ENCODE measurements at regions of chr15 and their contacts with region 1.

Region 1: GRCh38 chr15:92820236-92821021 is 79.7 kb upstream of the CHD2 start:
- DNase-seq: peak; percentile 88
- H3K4me3 Mint-ChIP-seq: peak overlapping the region; percentile 78
- H3K27ac Mint-ChIP-seq: peak overlapping the region; percentile 93
- H3K4me1 Mint-ChIP-seq: peaks cover 66% of the 10 kb centered on the region
- H3K27me3 Mint-ChIP-seq: no peaks in the 10 kb centered on the region

Region 2: DNA sequence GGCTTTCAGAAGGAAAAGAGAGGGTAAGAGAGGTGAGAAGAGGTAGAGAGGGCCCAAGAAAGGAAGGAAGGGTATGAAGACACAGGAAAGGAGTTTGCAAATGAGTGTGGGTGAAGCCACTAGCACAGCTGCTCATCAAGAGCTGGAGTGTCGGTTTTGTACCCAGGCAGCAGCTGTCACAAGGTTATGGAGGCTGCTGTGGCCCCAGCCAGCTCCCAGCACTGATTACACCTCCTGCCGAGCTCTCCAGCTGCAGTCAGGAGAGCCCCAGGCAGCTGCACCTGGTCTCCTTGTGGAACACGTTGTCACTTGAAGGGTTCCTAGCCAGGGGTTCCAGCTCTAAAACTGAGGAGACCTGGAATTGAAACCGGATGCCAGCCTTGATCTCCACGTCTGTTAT is 19.3 kb after region 1 on chr15:
- CTCF ChIA-PET with region 1: interaction called, 3 read pairs
- POLR2A ChIA-PET with region 1: interaction called, 12 read pairs
- DNase-seq: no peak
- H3K4me3 Mint-ChIP-seq: no peak overlapping the region
- H3K27ac Mint-ChIP-seq: peak overlapping the region; percentile 71
- H3K4me1 Mint-ChIP-seq: peaks cover 44% of the 10 kb centered on the region
- H3K27me3 Mint-ChIP-seq: no peaks in the 10 kb centered on the region

Region 3: GRCh38 chr15:92896561-92896960 is 76.1 kb after region 1 on chr15:
- CTCF ChIA-PET with region 1: interaction called, 5 read pairs
- POLR2A ChIA-PET with region 1: interaction called, 452 read pairs
- DNase-seq: no peak
- H3K4me3 Mint-ChIP-seq: no peak overlapping the region
- H3K27ac Mint-ChIP-seq: no peak overlapping the region
- H3K4me1 Mint-ChIP-seq: peaks cover 69% of the 10 kb centered on the region
- H3K27me3 Mint-ChIP-seq: no peaks in the 10 kb centered on the region

Measured in activated CD4-positive, alpha-beta memory T cell treated with anti-CD3 and anti-CD28 coated beads, Interleukin-2, amount 10 ng/mL, durations not matched to agents 7 days and 5 days (primary cell).